ENCODE measurements at regions of chr2 and their contacts with region 1.

Region 1: DNA sequence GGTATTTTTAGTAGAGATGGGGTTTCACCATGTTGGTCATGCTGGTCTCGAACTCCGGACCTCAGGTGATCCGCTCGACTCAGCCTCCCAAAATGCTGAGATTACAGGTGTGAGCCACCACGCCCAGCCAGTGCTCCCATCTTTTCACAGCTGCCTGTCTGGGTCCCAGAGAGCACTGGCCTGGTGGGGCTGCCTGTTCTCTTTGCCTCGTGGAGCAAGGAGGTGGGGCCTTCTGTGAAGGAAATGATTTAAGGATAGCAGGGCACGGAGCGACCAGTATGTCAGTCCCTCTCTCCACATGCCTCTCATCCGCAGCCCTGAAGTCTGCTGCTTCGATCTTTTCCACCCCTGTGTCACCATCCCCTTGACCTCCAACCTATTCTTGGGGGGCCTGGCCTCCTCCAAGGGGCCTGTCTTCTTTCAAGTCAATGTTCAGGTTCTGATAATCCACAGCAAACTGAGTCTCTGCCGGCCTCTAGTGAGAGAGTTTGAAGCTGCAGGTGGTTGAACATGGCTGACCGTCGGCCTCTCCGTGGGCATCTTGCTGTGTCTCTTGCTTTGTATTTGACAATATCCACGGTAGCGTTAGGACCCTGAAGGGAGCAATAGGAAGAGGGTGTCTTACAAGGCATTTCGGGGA is 28.2 kb upstream of the GIGYF2 start:
- DNase-seq: peak in 1 of 2 experiments; percentile 18
- H3K4me3 ChIP-seq: no peak overlapping the region
- H3K4me3 Mint-ChIP-seq: no peak overlapping the region
- H3K27ac Mint-ChIP-seq: no peak overlapping the region
- H3K4me1 ChIP-seq: no peaks in the 10 kb centered on the region
- H3K4me1 Mint-ChIP-seq: no peaks in the 10 kb centered on the region
- H3K27me3 ChIP-seq: no peaks in the 10 kb centered on the region
- H3K27me3 Mint-ChIP-seq: no peaks in the 10 kb centered on the region
- CTCF ChIP-seq: peak; percentile 21 to 52

Region 2: GRCh38 chr2:232611551-232612218 is 57.2 kb before region 1 on chr2:
- CTCF ChIA-PET with region 1: no interaction called
- POLR2A ChIA-PET with region 1: no interaction called
- intact Hi-C with region 1: loop called (anchors 1 kb)
- DNase-seq: peak; percentile 53 to 58
- H3K4me3 ChIP-seq: no peak overlapping the region
- H3K4me3 Mint-ChIP-seq: no peak overlapping the region
- H3K27ac Mint-ChIP-seq: no peak overlapping the region
- H3K4me1 ChIP-seq: no peaks in the 10 kb centered on the region
- H3K4me1 Mint-ChIP-seq: no peaks in the 10 kb centered on the region
- H3K27me3 ChIP-seq: no peaks in the 10 kb centered on the region
- H3K27me3 Mint-ChIP-seq: no peaks in the 10 kb centered on the region
- CTCF ChIP-seq: peak; percentile 66 to 75

Region 3: GRCh38 chr2:232623783-232624727 is 44.9 kb before region 1 on chr2:
- CTCF ChIA-PET with region 1: no interaction called
- POLR2A ChIA-PET with region 1: no interaction called
- intact Hi-C with region 1: no loop called
- DNase-seq: no peak
- H3K4me3 ChIP-seq: no peak overlapping the region
- H3K4me3 Mint-ChIP-seq: no peak overlapping the region
- H3K27ac Mint-ChIP-seq: no peak overlapping the region
- H3K4me1 ChIP-seq: no peaks in the 10 kb centered on the region
- H3K4me1 Mint-ChIP-seq: no peaks in the 10 kb centered on the region
- H3K27me3 ChIP-seq: no peaks in the 10 kb centered on the region
- H3K27me3 Mint-ChIP-seq: no peaks in the 10 kb centered on the region
- CTCF ChIP-seq: no peak

Measured in Caco-2 (cell line).